Activated B cell treated with CpG ODN at 0.5 μM for 24 hours (primary cell): ENCODE measurements at regions of chr3 and their contacts with region 1.

Region 1: GRCh38 chr3:128075516-128076482 is 23.6 kb downstream of the SEC61A1 start:
- DNase-seq: peak; percentile 93
- ATAC-seq: peak; percentile 88
- H3K4me3 Mint-ChIP-seq: peak overlapping the region; percentile 79
- H3K27ac Mint-ChIP-seq: no peak overlapping the region
- H3K4me1 Mint-ChIP-seq: peaks cover 13% of the 10 kb centered on the region
- H3K27me3 Mint-ChIP-seq: no peaks in the 10 kb centered on the region
- CTCF ChIP-seq: peak; percentile 48

Region 2: DNA sequence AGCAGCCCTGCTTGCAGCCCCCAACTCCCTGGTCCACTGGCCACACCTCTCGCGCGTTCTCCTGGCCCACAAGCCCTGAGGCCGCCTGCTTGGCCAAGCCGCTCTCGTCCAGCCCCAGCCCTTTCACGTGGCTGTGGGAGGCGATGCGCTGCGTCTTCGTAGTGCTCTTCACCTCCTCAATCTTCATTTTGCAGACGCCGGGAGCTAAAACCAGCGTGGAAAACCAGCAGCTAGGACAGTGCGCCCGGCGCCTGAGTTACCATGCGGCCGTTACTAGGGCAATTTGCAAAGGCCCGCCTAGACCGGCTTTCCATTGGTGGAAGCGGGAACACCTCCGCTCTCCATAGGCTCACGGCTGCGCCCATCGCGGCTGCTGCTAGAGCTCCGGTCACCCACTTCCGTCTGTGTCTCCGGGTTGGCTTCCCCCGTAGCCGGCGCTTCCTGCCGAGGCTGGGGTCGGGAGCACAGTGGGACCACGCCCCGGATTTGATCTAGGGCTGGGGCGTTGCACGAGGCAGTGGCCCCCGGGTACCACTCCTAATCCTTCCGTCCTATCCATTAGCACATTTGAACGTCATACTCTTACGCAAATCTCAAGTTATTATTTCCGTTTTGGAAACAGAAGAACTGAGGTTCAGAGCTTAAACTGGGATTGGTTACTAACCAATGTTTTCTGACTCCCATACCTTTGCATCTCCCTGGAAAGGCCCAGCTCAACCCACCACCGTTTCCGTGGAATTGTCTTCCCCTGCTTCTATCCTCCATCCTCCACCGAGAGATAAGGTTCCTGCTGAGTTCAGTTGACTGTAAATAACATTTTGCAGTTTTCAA is 48.0 kb after region 1 on chr3 and contains the start of gene RUVBL1:
- CTCF ChIA-PET with region 1: interaction called, 5 read pairs
- POLR2A ChIA-PET with region 1: interaction called, 7 read pairs
- intact Hi-C with region 1: loop called (anchors 1 kb)
- DNase-seq: peak; percentile 87
- ATAC-seq: peak; percentile 97
- H3K4me3 Mint-ChIP-seq: peak within 1 kb of the TSS; percentile 97
- H3K27ac Mint-ChIP-seq: peak within 1 kb of the TSS; percentile 93
- H3K4me1 Mint-ChIP-seq: peaks cover 23% of the 10 kb centered on the region
- H3K27me3 Mint-ChIP-seq: no peaks in the 10 kb centered on the region
- CTCF ChIP-seq: no peak
- total RNA-seq, gene RUVBL1: 44.8 and 46.6 TPM in 2 replicates

Region 3: DNA sequence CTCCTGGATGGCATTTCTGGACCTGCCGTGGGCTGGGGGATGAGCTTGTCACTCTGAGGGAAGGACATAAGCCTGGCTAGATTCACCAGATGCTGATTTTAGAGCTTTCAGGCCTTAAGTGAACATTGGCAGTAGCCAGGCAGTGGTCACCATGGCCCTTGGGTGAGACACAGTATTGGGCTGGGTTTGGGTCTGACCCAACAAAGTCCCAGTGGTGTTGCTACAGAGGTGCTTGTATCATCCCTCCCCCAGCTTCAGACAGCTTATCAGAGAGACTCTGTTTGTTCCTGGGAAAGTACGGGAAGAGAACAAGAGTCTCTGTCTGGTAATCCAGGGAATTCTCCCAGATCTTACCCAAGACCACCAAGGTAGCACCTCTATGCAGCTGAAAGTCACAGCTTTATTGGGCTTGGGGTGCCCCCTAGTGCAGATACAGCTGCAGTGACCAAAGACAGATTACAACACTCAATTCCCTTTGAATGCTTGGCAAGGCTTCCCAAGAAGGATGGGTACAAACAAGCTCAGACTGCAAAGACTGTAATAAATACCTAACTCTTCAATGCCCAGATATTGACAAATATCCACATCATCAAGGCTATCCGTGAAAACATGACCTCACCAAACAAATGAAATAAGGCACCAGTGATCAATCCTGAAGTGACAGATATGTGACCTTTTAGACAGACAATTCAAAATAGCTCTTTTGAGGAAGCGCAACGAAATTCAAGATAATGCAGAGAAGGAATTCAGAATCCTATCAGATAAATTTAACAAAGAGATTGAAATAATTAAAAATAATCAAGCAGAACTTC is 57.7 kb after region 1 on chr3:
- CTCF ChIA-PET with region 1: interaction called, 7 read pairs
- POLR2A ChIA-PET with region 1: no interaction called
- intact Hi-C with region 1: loop called (anchors 1 kb)
- DNase-seq: no peak
- ATAC-seq: no peak
- H3K4me3 Mint-ChIP-seq: no peak overlapping the region
- H3K27ac Mint-ChIP-seq: no peak overlapping the region
- H3K4me1 Mint-ChIP-seq: no peaks in the 10 kb centered on the region
- H3K27me3 Mint-ChIP-seq: peaks cover 7% of the 10 kb centered on the region
- CTCF ChIP-seq: no peak

Region 4: DNA sequence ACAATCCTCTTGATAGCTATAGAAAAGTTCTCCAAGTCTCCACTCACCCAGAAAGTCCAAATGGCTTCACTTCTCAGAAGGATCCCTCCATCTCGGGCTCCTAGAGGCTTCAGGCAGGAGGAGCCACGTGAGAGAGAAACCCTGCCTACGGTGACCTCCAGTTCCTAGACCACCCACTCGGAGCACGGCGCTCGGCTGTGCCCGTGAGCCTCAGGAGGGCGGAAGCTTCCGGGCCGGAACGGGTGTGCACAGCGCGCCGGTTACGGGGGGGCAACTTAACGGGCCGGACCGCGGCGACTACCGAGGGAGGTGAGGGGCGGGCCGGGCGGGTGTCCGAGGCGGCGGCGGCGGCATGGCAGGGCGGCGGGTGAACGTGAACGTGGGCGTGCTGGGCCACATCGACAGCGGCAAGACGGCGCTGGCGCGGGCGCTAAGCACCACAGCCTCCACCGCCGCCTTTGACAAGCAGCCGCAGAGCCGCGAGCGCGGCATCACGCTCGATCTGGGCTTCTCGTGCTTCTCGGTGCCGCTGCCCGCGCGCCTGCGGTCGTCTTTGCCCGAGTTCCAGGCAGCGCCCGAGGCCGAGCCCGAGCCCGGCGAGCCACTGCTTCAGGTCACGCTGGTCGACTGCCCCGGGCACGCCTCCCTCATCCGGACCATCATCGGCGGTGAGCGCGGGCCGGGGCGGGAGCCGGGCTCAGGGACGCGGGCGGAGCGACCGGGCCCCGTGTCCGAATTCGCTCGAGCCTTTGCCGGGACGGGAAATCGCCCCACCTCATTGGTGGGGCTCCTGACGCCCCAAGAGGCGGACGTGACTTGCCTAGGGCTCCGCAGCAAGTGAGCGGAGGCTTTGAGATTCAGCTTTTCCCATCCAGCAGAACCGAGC is 77.6 kb after region 1 on chr3 and contains the start of gene EEFSEC:
- CTCF ChIA-PET with region 1: no interaction called
- POLR2A ChIA-PET with region 1: interaction called, 3 read pairs
- intact Hi-C with region 1: loop called (anchors 2 kb)
- DNase-seq: peak; percentile 89
- ATAC-seq: peak; percentile 95
- H3K4me3 Mint-ChIP-seq: peak within 1 kb of the TSS; percentile 96
- H3K27ac Mint-ChIP-seq: peak within 1 kb of the TSS; percentile 95
- H3K4me1 Mint-ChIP-seq: peaks cover 17% of the 10 kb centered on the region
- H3K27me3 Mint-ChIP-seq: no peaks in the 10 kb centered on the region
- CTCF ChIP-seq: no peak
- total RNA-seq, gene EEFSEC: 20.0 and 21.3 TPM in 2 replicates

Region 5: GRCh38 chr3:128497387-128498126 is 421.8 kb after region 1 on chr3:
- CTCF ChIA-PET with region 1: no interaction called
- POLR2A ChIA-PET with region 1: no interaction called
- intact Hi-C with region 1: loop called (anchors 1 kb)
- DNase-seq: peak; percentile 62
- ATAC-seq: peak; percentile 52
- H3K4me3 Mint-ChIP-seq: peak overlapping the region; percentile 74
- H3K27ac Mint-ChIP-seq: no peak overlapping the region
- H3K4me1 Mint-ChIP-seq: peaks cover 9% of the 10 kb centered on the region
- H3K27me3 Mint-ChIP-seq: peaks cover 60% of the 10 kb centered on the region
- CTCF ChIP-seq: no peak

Region 6: GRCh38 chr3:128607710-128608048 is 531.9 kb after region 1 on chr3:
- CTCF ChIA-PET with region 1: no interaction called
- POLR2A ChIA-PET with region 1: no interaction called
- intact Hi-C with region 1: loop called (anchors 1 kb)
- DNase-seq: no peak
- ATAC-seq: no peak
- H3K4me3 Mint-ChIP-seq: peak overlapping the region; percentile 24
- H3K27ac Mint-ChIP-seq: no peak overlapping the region
- H3K4me1 Mint-ChIP-seq: peaks cover 2% of the 10 kb centered on the region
- H3K27me3 Mint-ChIP-seq: no peaks in the 10 kb centered on the region
- CTCF ChIP-seq: no peak